ENCODE measurements at regions of chr9 and their contacts with region 1.

Region 1: DNA sequence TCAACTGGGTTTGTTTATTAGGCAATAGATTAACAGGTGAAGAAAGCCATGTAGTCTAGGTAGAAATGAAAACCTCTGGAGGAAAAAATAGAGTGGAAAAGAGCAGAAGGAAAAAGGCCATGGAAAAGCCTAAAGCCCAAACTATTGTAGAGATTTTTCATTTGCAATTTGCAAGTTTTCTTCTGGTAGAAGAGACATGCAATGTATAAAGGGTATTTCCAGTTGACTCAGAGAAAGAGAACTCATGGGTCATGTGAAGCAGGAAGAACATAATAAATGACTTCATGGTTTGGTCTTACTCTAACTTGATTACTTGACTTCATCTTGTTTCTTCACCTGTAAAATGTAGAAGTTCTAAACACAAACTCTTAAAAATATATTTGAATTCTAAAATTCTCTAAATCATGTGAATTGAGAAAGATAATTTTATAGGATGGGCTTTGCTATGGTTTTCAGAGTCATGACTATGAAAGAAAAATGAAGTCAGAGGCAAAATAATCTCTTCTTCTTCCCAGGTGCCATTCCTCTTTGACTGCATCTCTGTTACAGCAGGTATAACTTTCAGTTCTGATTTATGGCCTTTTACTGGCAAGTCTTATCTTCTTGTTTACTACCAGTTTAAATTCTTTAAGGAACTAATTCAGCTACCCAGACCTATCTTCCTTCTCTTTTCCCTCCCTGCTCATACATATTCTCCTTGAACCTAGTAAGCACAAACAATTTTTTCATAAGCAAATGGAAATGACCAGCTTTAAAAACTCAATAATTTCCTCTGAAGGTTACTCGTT is 47.7 kb upstream of the TMC1 start:
- DNase-seq: peak; percentile 48
- ATAC-seq: peak; percentile 94
- H3K4me3 ChIP-seq: no peak overlapping the region
- H3K27ac ChIP-seq: peak overlapping the region; percentile 94
- H3K4me1 ChIP-seq: peaks cover 4% of the 10 kb centered on the region
- H3K27me3 ChIP-seq: no peaks in the 10 kb centered on the region
- CTCF ChIP-seq: no peak
- EP300 ChIP-seq: peak in 1 of 2 experiments; percentile 70; a peak in 2 of 4 replicates
- POLR2A ChIP-seq: no peak
- RAD21 ChIP-seq: no peak

Region 2: GRCh38 chr9:72454871-72455491 is 18.7 kb before region 1 on chr9:
- CTCF ChIA-PET with region 1: interaction called, 17 read pairs
- POLR2A ChIA-PET with region 1: interaction called, 16 read pairs
- RAD21 ChIA-PET with region 1: interaction called, 10 read pairs
- SMC1A ChIA-PET with region 1: interaction called, 31 read pairs
- in situ Hi-C with region 1: no loop called
- intact Hi-C with region 1: no loop called
- DNase-seq: no peak
- ATAC-seq: no peak; the same call in 2 of the 3 replicates
- H3K4me3 ChIP-seq: no peak overlapping the region
- H3K27ac ChIP-seq: no peak overlapping the region
- H3K4me1 ChIP-seq: no peaks in the 10 kb centered on the region
- H3K27me3 ChIP-seq: no peaks in the 10 kb centered on the region
- CTCF ChIP-seq: no peak
- EP300 ChIP-seq: no peak
- POLR2A ChIP-seq: no peak
- RAD21 ChIP-seq: no peak

Region 3: DNA sequence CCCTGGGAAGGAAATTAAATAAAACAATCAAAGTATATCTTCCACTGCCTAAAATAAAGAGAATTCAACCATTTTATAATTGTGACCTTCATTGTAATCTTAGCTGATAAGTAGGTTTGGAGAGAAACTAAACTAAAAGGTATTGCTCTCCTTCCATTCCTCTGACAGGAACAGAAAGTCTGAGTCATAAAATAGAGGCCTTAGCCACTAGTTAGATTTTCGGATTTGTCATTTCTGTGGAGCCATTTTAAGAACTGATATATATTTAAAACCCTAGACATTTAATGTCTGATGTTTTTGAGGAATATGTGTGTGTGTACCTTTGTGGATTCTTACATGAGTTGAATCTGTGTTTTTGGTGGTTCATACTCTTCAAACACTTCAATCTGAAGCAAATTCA is 36.0 kb after region 1 on chr9:
- CTCF ChIA-PET with region 1: interaction called, 3 read pairs
- POLR2A ChIA-PET with region 1: interaction called, 4 read pairs
- RAD21 ChIA-PET with region 1: interaction called, 4 read pairs
- SMC1A ChIA-PET with region 1: interaction called, 24 read pairs
- in situ Hi-C with region 1: no loop called
- intact Hi-C with region 1: no loop called
- DNase-seq: peak; percentile 51
- ATAC-seq: peak; percentile 96
- H3K4me3 ChIP-seq: no peak overlapping the region
- H3K27ac ChIP-seq: peak overlapping the region; percentile 88
- H3K4me1 ChIP-seq: peaks cover 14% of the 10 kb centered on the region
- H3K27me3 ChIP-seq: no peaks in the 10 kb centered on the region
- CTCF ChIP-seq: no peak
- EP300 ChIP-seq: peak in 1 of 2 experiments; percentile 45; a peak in 1 of 4 replicates
- POLR2A ChIP-seq: no peak
- RAD21 ChIP-seq: no peak

Region 4: GRCh38 chr9:72763022-72763421 is 289.4 kb after region 1 on chr9:
- CTCF ChIA-PET with region 1: no interaction called
- POLR2A ChIA-PET with region 1: no interaction called
- RAD21 ChIA-PET with region 1: no interaction called
- SMC1A ChIA-PET with region 1: no interaction called
- in situ Hi-C with region 1: no loop called
- intact Hi-C with region 1: no loop called
- DNase-seq: no peak
- ATAC-seq: no peak
- H3K4me3 ChIP-seq: no peak overlapping the region
- H3K27ac ChIP-seq: no peak overlapping the region
- H3K4me1 ChIP-seq: no peaks in the 10 kb centered on the region
- H3K27me3 ChIP-seq: no peaks in the 10 kb centered on the region
- CTCF ChIP-seq: no peak
- EP300 ChIP-seq: no peak
- POLR2A ChIP-seq: no peak
- RAD21 ChIP-seq: no peak

Measured in GM12878 (cell line).